ENCODE measurements at regions of chr3 and their contacts with region 1.

Region 1: DNA sequence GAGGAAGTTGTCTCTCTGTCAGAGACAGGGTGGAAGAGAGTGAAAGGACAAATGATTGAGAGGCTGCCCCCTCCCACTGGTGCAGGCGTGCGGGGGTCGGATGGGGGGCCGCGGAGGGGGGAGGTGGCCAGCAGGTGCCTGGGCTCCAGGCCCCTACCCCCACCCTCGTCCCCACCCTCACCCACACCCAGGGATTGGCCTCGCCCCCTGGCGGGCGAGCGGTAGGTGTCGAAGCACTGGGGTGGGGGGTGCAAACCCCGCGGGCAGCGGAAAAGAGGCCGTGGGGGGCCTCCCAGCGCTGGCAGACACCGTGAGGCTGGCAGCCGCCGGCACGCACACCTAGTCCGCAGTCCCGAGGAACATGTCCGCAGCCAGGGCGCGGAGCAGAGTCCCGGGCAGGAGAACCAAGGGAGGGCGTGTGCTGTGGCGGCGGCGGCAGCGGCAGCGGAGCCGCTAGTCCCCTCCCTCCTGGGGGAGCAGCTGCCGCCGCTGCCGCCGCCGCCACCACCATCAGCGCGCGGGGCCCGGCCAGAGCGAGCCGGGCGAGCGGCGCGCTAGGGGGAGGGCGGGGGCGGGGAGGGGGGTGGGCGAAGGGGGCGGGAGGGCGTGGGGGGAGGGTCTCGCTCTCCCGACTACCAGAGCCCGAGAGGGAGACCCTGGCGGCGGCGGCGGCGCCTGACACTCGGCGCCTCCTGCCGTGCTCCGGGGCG is at the start of gene KAT2B:
- DNase-seq: peak; percentile 64
- H3K4me3 ChIP-seq: peak within 1 kb of the TSS; percentile 76 to 96 (median 89)
- H3K27ac ChIP-seq: peak within 1 kb of the TSS; percentile 20
- H3K4me1 ChIP-seq: peaks cover 23% of the 10 kb centered on the region
- H3K27me3 ChIP-seq: no peaks in the 10 kb centered on the region
- CTCF ChIP-seq: peak; percentile 13 to 75
- total RNA-seq, gene KAT2B: 8.6 to 16.2 TPM

Region 2: GRCh38 chr3:19885468-19885867 is 154.5 kb before region 1 on chr3:
- CTCF ChIA-PET with region 1: no interaction called
- dilution Hi-C with region 1: no loop called
- in situ Hi-C with region 1: no loop called
- intact Hi-C with region 1: loop called (anchors 5 kb)
- DNase-seq: peak; percentile 13
- H3K4me3 ChIP-seq: no peak overlapping the region
- H3K27ac ChIP-seq: no peak overlapping the region
- H3K4me1 ChIP-seq: peaks cover 14% of the 10 kb centered on the region
- H3K27me3 ChIP-seq: no peaks in the 10 kb centered on the region
- CTCF ChIP-seq: peak; percentile 49 to 61

Region 3: GRCh38 chr3:20054549-20054987 is 14.6 kb after region 1 on chr3:
- CTCF ChIA-PET with region 1: interaction called, 3 read pairs
- dilution Hi-C with region 1: no loop called
- in situ Hi-C with region 1: no loop called
- intact Hi-C with region 1: loop called (anchors 1 kb)
- DNase-seq: peak; percentile 99
- H3K4me3 ChIP-seq: no peak overlapping the region
- H3K27ac ChIP-seq: peak overlapping the region; percentile 32
- H3K4me1 ChIP-seq: peaks cover 37% of the 10 kb centered on the region
- H3K27me3 ChIP-seq: no peaks in the 10 kb centered on the region
- CTCF ChIP-seq: no peak